Naive thymus-derived CD4-positive, alpha-beta T cell (primary cell): ENCODE measurements at regions of chr18 and their contacts with region 1.

Region 1: DNA sequence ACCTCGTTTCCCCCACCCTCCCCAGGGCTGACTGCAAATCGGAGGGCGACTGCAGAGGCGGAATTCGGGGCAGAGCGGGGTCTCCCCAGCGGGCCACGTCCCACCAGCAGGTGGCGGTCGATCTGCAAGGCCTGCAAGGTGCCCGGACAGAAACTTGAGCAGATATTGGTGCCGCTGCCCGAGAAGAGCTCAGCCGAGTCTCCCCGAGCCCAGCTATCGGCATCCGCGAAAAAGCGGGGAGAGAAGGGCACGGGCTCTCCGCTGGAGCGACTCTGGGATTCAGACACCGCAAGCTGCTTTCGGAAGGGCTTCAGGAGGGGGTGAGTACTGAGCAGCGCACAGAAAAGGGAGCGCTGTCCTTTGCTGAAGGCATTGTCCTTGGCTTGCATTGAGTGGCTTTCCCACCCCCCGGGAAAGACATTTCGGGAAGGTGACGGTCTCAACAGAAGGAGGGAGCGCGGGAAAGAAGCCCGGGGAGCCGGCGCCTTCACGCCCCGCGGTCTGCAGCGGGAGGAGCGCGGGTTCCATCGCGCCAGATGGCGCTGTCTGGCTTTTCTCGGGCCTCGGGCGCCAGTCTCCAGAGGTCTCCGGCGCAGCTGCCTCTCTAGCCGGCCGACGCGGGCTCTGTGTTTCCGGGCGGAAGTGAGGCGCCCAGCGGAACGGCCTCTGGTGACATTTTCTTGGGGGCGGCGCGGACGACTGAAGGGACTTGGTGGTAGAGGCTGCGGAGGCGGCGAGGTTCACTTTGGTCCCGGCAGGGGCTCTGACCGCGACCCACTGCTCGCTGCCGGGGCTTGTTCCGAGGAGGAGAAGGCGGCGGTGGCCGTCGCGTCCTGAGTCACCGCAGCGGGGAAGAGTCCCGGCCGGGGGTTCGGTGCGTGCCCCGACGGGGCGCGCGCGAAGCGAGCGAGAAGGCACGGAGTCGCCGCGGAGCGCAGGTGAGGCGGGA is 69.5 kb downstream of the HAUS1 start:
- DNase-seq: peak; percentile 85 to 93 (median 90)
- ATAC-seq: peak; percentile 96
- H3K4me3 ChIP-seq: peak overlapping the region; percentile 98
- H3K4me3 Mint-ChIP-seq: peak overlapping the region; percentile 93 to 99 (median 98)
- H3K27ac ChIP-seq: peak overlapping the region; percentile 84
- H3K27ac Mint-ChIP-seq: peak overlapping the region; percentile 93 to 99 (median 96)
- H3K4me1 ChIP-seq: peaks cover 13 to 14% of the 10 kb centered on the region in 2 donors
- H3K4me1 Mint-ChIP-seq: peaks cover 34 to 48% (median 42%) of the 10 kb centered on the region in 7 donors
- H3K27me3 ChIP-seq: no peaks in the 10 kb centered on the region
- H3K27me3 Mint-ChIP-seq: peaks cover 0 to 3% (median 0%) of the 10 kb centered on the region in 5 donors

Region 2: DNA sequence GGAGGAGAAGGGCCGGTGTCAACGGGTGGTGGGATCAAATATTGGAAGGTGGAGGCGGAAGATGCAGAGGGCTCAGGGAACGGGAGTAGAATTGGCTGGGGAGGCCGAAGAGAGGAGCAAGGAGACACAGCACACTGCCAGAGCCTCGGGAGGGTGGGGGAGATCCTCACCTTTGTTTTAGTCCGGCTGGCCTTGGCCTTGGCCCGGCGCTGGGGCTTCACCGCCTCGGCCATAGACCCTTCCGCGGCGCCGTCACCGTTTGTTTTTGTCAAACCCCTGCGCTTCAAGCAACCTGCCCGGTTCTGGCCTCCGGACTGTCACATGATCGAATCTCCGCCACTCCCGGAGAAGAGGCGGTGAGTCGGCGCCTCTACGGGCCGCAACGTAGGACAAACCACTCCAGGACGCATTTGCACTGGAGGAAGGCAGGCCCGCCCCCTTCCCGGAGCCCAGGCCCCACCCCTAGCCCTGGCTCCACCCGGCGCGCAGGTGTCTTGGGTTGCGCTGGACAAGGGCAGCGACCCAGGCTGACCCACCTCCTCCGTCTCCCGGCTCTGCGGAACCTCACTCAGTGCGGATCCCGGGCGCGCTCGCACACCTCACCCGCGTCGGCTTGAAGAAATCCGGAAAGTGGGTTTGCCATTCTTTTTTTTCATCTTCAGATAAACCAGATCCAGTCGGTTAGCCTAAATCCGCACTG is 206.5 kb before region 1 on chr18 and contains the start of gene EPG5:
- CTCF ChIA-PET with region 1: no interaction called
- POLR2A ChIA-PET with region 1: no interaction called
- intact Hi-C with region 1: loop called (anchors 1 kb)
- DNase-seq: peak; percentile 73 to 91 (median 90)
- ATAC-seq: peak; percentile 98
- H3K4me3 ChIP-seq: peak within 1 kb of the TSS; percentile 79
- H3K4me3 Mint-ChIP-seq: peak within 1 kb of the TSS; percentile 94 to 100 (median 97)
- H3K27ac ChIP-seq: peak within 1 kb of the TSS; percentile 86
- H3K27ac Mint-ChIP-seq: peak within 1 kb of the TSS; percentile 84 to 98 (median 97)
- H3K4me1 ChIP-seq: peaks cover 14 to 25% of the 10 kb centered on the region in 2 donors
- H3K4me1 Mint-ChIP-seq: peaks cover 33 to 55% (median 47%) of the 10 kb centered on the region in 7 donors
- H3K27me3 ChIP-seq: no peaks in the 10 kb centered on the region
- H3K27me3 Mint-ChIP-seq: no peaks in the 10 kb centered on the region
- total RNA-seq, gene EPG5: 26.0 to 54.8 (median 44.7) TPM

Region 3: DNA sequence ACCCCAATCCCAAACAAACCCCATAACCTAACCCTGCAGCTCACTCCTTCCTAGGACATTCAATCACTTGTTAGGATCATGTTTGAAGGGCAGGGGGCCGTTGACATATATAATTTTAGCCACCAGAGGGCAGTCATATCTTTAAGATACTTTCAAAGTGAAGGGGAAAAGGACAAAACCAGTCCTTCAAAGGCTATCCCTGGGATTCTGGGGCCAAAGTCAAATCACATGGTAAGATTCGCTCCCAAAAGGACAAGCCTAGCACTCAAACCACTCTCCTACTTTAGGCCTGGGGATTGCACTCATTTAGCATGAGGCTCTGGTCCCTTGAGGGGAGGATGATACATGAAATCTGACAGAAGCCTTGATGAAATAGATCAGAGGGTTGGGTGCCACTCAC is 24.9 kb before region 1 on chr18:
- CTCF ChIA-PET with region 1: interaction called, 27 read pairs
- POLR2A ChIA-PET with region 1: interaction called, 6 read pairs
- intact Hi-C with region 1: loop called (anchors 1 kb)
- DNase-seq: peak; percentile 14 to 65 (median 51)
- ATAC-seq: peak; percentile 70
- H3K4me3 ChIP-seq: no peak overlapping the region
- H3K4me3 Mint-ChIP-seq: peak overlapping the region in 6 of 10 donors; percentile 5 to 39 (median 28)
- H3K27ac ChIP-seq: no peak overlapping the region
- H3K27ac Mint-ChIP-seq: peak overlapping the region; percentile 9 to 87 (median 75)
- H3K4me1 ChIP-seq: peaks cover 21 to 43% of the 10 kb centered on the region in 2 donors
- H3K4me1 Mint-ChIP-seq: peaks cover 9 to 48% (median 45%) of the 10 kb centered on the region in 7 donors
- H3K27me3 ChIP-seq: no peaks in the 10 kb centered on the region
- H3K27me3 Mint-ChIP-seq: peaks cover 0 to 3% (median 0%) of the 10 kb centered on the region in 5 donors

Region 4: DNA sequence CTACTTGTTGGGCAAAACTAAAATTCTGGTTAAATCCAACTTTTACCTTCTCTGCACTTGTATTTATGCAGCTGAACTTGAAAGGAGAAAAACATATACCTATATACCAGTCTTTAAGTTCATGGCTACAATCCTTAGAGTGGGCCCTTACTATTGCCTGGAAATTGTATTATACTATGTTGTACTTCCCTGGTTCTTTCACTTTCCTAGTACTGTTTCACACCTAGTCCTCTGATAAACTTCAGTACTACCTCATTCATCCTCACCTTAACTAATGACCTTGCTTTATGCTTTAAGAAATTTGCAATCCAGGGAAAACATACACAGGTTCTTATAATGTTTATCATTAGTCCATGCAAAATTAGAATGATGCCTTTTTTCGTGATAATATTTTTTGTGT is 34.3 kb after region 1 on chr18:
- CTCF ChIA-PET with region 1: interaction called, 13 read pairs
- POLR2A ChIA-PET with region 1: no interaction called
- intact Hi-C with region 1: loop called (anchors 1 kb)
- DNase-seq: no peak
- ATAC-seq: no peak
- H3K4me3 ChIP-seq: no peak overlapping the region
- H3K4me3 Mint-ChIP-seq: peak overlapping the region in 3 of 10 donors; percentile 4 to 29 (median 6)
- H3K27ac ChIP-seq: no peak overlapping the region
- H3K27ac Mint-ChIP-seq: peak overlapping the region in 7 of 9 donors; percentile 7 to 81 (median 53)
- H3K4me1 ChIP-seq: peaks cover 24 to 59% of the 10 kb centered on the region in 2 donors
- H3K4me1 Mint-ChIP-seq: peaks cover 61 to 97% (median 86%) of the 10 kb centered on the region in 7 donors
- H3K27me3 ChIP-seq: no peaks in the 10 kb centered on the region
- H3K27me3 Mint-ChIP-seq: no peaks in the 10 kb centered on the region

Region 5: GRCh38 chr18:46281185-46282176 is 107.8 kb after region 1 on chr18:
- CTCF ChIA-PET with region 1: interaction called, 6 read pairs
- POLR2A ChIA-PET with region 1: no interaction called
- intact Hi-C with region 1: loop called in 1 of 2 experiments (anchors 5 kb)
- DNase-seq: peak in 8 of 9 donors; percentile 7 to 60 (median 40)
- ATAC-seq: peak; percentile 85
- H3K4me3 ChIP-seq: no peak overlapping the region
- H3K4me3 Mint-ChIP-seq: no peak overlapping the region
- H3K27ac ChIP-seq: no peak overlapping the region
- H3K27ac Mint-ChIP-seq: no peak overlapping the region
- H3K4me1 ChIP-seq: no peaks in the 10 kb centered on the region
- H3K4me1 Mint-ChIP-seq: peaks cover 6 to 16% (median 14%) of the 10 kb centered on the region in 7 donors
- H3K27me3 ChIP-seq: no peaks in the 10 kb centered on the region
- H3K27me3 Mint-ChIP-seq: no peaks in the 10 kb centered on the region

Region 6: GRCh38 chr18:46481048-46481846 is 307.6 kb after region 1 on chr18:
- CTCF ChIA-PET with region 1: interaction called, 7 read pairs
- POLR2A ChIA-PET with region 1: no interaction called
- intact Hi-C with region 1: loop called (anchors 1 to 2 kb)
- DNase-seq: peak in 6 of 9 donors; percentile 31 to 60 (median 40)
- ATAC-seq: peak; percentile 67
- H3K4me3 ChIP-seq: no peak overlapping the region
- H3K4me3 Mint-ChIP-seq: no peak overlapping the region
- H3K27ac ChIP-seq: no peak overlapping the region
- H3K27ac Mint-ChIP-seq: no peak overlapping the region
- H3K4me1 ChIP-seq: no peaks in the 10 kb centered on the region
- H3K4me1 Mint-ChIP-seq: no peaks in the 10 kb centered on the region
- H3K27me3 ChIP-seq: no peaks in the 10 kb centered on the region
- H3K27me3 Mint-ChIP-seq: peaks cover 0 to 22% (median 10%) of the 10 kb centered on the region in 5 donors

Region 7: DNA sequence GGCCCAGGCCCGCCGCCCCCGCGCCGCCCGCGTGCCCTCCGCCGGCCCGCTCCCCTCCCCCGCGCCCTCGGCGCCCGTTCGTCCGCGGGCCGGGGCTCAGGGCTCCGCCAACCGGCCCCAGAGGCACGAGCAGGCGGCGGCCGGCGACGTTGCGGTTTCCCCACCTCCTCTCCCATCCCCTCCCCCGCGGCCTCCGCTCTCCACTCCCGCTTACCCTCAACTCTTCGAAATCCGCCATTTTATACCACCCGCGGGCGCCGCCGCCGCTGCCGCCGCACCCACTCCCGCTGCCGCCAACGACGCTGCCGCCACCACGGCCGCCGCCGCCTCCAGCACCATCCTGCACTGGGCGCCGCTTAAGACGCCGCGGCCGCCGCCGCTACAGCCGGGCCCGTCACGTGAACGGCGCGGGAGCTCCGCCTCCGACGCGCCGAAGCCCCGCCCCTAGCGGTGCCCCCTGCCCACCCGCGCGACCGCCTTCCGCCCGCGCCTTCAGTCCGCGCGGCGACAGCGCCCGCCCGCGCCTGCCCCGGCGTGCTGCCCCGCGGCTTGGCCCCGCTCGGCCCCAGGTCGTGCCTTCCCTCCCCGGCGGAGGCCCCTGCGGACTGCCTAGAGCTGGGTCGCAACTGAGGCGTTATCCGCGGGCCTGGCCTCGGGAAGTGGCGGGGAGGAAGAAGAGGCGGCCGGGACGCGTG is 743.6 kb after region 1 on chr18 and contains the starts of genes KATNAL2 and PIAS2:
- CTCF ChIA-PET with region 1: interaction called, 3 read pairs
- POLR2A ChIA-PET with region 1: no interaction called
- intact Hi-C with region 1: loop called (anchors 1 to 5 kb)
- DNase-seq: peak; percentile 65 to 83 (median 70)
- ATAC-seq: peak; percentile 91
- H3K4me3 ChIP-seq: peak within 1 kb of the TSS; percentile 59
- H3K4me3 Mint-ChIP-seq: peak within 1 kb of the TSS; percentile 90 to 97 (median 93)
- H3K27ac ChIP-seq: peak within 1 kb of the TSS; percentile 75
- H3K27ac Mint-ChIP-seq: peak within 1 kb of the TSS; percentile 82 to 94 (median 87)
- H3K4me1 ChIP-seq: peaks cover 12 to 26% of the 10 kb centered on the region in 2 donors
- H3K4me1 Mint-ChIP-seq: peaks cover 36 to 56% (median 52%) of the 10 kb centered on the region in 7 donors
- H3K27me3 ChIP-seq: no peaks in the 10 kb centered on the region
- H3K27me3 Mint-ChIP-seq: peaks cover 0 to 7% (median 0%) of the 10 kb centered on the region in 5 donors
- total RNA-seq, gene KATNAL2: 1.1 to 2.8 (median 1.7) TPM
- total RNA-seq, gene PIAS2: 29.8 to 40.6 (median 36.1) TPM